ENCODE measurements at regions of chr22 and their contacts with region 1.

Region 1: GRCh38 chr22:36470162-36470993 is 11.1 kb downstream of the TXN2 start:
- DNase-seq: no peak
- H3K4me3 ChIP-seq: no peak overlapping the region
- H3K27ac ChIP-seq: peak overlapping the region; percentile 61 to 88 (median 86)
- H3K4me1 ChIP-seq: peaks cover 19 to 79% (median 30%) of the 10 kb centered on the region in 3 donors
- H3K27me3 ChIP-seq: no peaks in the 10 kb centered on the region
- CTCF ChIP-seq: peak; percentile 85 to 98 (median 96)
- POLR2A ChIP-seq: no peak

Region 2: GRCh38 chr22:36304452-36305158 is 165.8 kb before region 1 on chr22:
- intact Hi-C with region 1: loop called (anchors 5 kb)
- DNase-seq: no peak
- H3K4me3 ChIP-seq: no peak overlapping the region
- H3K27ac ChIP-seq: peak overlapping the region in 3 of 4 donors; percentile 39 to 68 (median 48)
- H3K4me1 ChIP-seq: peaks cover 0 to 6% (median 0%) of the 10 kb centered on the region in 3 donors
- H3K27me3 ChIP-seq: no peaks in the 10 kb centered on the region
- CTCF ChIP-seq: no peak
- POLR2A ChIP-seq: no peak

Region 3: DNA sequence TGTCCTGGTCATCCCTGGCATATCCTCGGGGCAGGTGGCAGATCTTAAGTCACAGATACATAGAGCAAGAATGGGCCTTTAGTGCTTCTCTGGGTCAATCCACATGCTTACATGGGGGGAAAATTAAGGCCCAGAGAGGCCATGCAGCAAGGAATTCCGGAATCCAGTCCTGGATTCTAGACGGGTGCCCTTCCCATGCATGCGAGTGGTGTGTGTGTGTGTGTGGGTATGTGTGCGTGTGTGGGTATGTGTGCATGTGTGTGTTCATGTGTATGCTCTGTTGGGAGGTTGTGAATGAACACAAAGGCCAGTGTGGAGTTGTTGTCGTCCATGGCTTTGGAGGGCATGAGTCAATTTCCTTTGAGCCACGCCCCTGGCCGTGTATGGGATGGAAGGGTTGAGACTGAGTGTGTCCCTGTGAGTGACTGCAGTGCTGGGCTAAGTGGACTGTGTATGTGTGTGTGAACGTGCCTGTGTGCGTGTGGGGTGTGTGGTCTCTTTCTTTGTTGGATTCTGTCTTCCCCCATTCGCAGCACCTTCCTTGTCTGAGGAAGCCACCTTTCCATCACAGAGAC is 92.0 kb after region 1 on chr22:
- intact Hi-C with region 1: no loop called
- DNase-seq: no peak
- H3K4me3 ChIP-seq: no peak overlapping the region
- H3K27ac ChIP-seq: peak overlapping the region in 1 of 4 donors; percentile 28
- H3K4me1 ChIP-seq: peaks cover 0 to 18% (median 7%) of the 10 kb centered on the region in 3 donors
- H3K27me3 ChIP-seq: peaks cover 0 to 42% (median 0%) of the 10 kb centered on the region in 4 donors
- CTCF ChIP-seq: no peak
- POLR2A ChIP-seq: no peak